ENCODE measurements at regions of chr1 and their contacts with region 1.

Region 1: GRCh38 chr1:228486596-228487335 is 416 bp upstream of the RNF187 start:
- DNase-seq: peak; percentile 65
- ATAC-seq: peak; percentile 64
- H3K4me3 Mint-ChIP-seq: peak overlapping the region; percentile 94
- H3K27ac Mint-ChIP-seq: peak overlapping the region; percentile 100
- H3K4me1 Mint-ChIP-seq: peaks cover 38% of the 10 kb centered on the region
- H3K27me3 Mint-ChIP-seq: no peaks in the 10 kb centered on the region
- CTCF ChIP-seq: no peak

Region 2: DNA sequence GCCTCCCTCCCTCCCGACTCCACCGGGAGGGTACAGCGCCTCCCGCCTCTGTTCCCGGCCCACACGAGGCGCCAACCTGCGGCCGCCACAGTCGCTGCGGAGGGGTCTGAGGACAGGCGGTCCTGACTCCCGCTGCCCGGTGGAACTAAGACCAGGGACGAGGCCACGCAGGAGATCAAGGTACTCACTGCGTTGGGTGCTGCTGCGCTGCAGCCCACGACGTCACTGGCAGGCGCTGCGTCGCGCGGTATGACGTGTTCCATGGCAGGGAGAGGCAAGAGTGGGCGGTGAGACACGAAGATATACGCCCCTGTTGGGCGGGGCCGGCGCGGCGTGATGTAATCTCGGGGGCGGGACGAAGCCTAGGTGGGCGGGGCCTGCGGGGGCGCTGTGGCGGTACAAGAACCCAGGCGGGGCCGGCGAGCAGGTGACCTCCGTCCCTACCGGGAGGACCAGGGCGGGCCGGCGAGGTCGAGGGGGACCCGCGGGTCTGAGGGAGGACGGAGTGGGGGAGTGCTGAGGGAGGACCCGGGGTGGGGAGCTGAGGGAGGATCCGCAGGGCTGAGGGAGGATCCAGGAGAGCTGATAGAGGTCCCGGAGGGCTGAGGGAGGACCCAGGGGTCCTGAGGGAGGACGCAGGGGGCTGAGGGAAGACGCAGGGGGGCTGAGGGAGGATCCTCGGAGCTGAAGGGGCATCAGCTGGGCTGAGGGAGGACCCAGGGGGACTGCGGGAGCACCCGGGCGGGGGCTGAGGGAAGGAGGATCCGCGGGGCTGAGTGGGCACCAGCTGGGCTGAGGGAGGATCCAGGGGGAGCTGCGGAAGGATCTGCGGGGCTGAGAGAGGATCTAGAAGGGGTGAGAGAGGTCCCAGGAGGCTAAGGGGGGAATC is 377.4 kb before region 1 on chr1 and contains the start of gene MRPL55:
- CTCF ChIA-PET with region 1: no interaction called
- POLR2A ChIA-PET with region 1: interaction called, 4 read pairs
- intact Hi-C with region 1: loop called (anchors 1 kb)
- DNase-seq: peak; percentile 100
- ATAC-seq: peak; percentile 96
- H3K4me3 Mint-ChIP-seq: peak within 1 kb of the TSS; percentile 92
- H3K27ac Mint-ChIP-seq: peak within 1 kb of the TSS; percentile 93
- H3K4me1 Mint-ChIP-seq: peaks cover 24% of the 10 kb centered on the region
- H3K27me3 Mint-ChIP-seq: no peaks in the 10 kb centered on the region
- CTCF ChIP-seq: no peak
- total RNA-seq, gene MRPL55: 34.0 and 34.3 TPM in 2 replicates

Region 3: DNA sequence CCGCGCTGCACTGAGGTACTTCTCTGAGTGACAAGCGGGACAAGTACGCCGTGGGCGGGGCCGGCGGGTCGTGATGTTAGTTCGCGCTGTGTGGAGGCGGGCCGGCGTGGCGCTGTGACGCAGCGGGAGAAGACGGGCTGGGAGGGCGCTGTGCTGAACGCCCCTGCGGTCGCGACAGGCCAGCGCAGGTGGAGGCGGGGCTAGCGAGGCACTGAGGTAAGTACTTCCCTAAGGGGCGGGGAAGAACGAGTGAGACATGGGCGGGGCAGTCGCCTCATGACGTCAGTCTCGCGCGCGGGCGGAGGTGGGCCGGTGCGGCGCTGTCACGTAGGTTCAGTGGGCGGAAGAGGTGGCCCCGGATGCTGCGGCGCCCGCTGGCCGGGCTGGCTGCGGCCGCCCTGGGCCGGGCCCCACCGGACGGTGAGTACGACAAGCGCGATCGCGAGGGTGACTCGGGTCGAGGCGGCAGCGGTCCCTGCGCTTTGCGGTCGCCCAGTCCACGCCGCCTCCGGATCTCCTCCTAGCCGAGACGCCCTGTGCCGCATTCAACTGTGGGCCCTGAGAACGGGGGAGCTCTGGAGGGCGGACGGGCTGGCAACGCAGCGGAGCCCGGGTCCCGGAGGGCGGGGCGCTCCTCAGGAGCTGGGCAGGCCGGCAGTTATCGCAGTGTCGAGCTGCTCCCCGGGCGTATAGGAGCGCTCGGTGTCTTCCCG is 346.7 kb before region 1 on chr1 and contains the start of gene GUK1:
- CTCF ChIA-PET with region 1: no interaction called
- POLR2A ChIA-PET with region 1: interaction called, 7 read pairs
- intact Hi-C with region 1: loop called (anchors 1 kb)
- DNase-seq: peak; percentile 99
- ATAC-seq: peak; percentile 92
- H3K4me3 Mint-ChIP-seq: peak within 1 kb of the TSS; percentile 96
- H3K27ac Mint-ChIP-seq: peak within 1 kb of the TSS; percentile 99
- H3K4me1 Mint-ChIP-seq: peaks cover 71% of the 10 kb centered on the region
- H3K27me3 Mint-ChIP-seq: no peaks in the 10 kb centered on the region
- CTCF ChIP-seq: no peak
- total RNA-seq, gene GUK1: 104 and 119 TPM in 2 replicates

Region 4: DNA sequence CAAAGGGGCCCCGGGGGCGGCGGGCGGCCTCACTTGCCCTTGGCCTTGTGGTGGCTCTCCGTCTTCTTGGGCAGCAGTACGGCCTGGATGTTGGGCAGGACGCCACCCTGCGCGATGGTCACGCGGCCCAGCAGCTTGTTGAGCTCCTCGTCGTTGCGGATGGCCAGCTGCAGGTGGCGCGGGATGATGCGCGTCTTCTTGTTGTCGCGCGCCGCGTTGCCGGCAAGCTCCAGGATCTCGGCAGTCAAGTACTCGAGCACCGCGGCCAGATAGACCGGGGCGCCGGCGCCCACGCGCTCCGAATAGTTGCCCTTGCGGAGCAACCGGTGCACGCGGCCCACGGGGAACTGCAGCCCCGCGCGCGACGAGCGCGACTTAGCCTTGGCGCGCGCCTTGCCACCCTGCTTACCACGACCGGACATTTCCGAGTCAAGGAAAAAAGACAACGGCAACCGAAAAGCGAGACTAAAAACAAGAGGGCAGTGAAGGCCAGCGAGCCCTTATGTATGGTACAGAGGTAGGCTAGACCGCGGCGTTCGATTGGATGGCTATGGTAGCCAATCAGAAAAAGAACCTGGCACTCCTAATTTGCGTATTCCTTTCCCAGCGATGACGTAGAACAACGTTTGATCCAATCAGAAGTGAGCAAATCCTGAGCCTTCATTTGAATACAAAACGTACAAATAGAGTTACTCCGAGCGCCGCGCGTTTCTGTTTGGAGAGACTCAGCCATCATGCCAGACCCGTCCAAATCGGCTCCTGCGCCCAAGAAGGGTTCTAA is 29.2 kb before region 1 on chr1:
- CTCF ChIA-PET with region 1: no interaction called
- POLR2A ChIA-PET with region 1: interaction called, 23 read pairs
- intact Hi-C with region 1: no loop called
- DNase-seq: peak; percentile 53
- ATAC-seq: peak; percentile 85
- H3K4me3 Mint-ChIP-seq: peak overlapping the region; percentile 89
- H3K27ac Mint-ChIP-seq: peak overlapping the region; percentile 89
- H3K4me1 Mint-ChIP-seq: peaks cover 25% of the 10 kb centered on the region
- H3K27me3 Mint-ChIP-seq: peaks cover 26% of the 10 kb centered on the region
- CTCF ChIP-seq: no peak

Region 5: GRCh38 chr1:228500901-228501871 is 14.4 kb after region 1 on chr1:
- CTCF ChIA-PET with region 1: interaction called, 16 read pairs
- POLR2A ChIA-PET with region 1: interaction called, 35 read pairs
- intact Hi-C with region 1: loop called (anchors 1 kb)
- DNase-seq: peak; percentile 72
- ATAC-seq: peak; percentile 96
- H3K4me3 Mint-ChIP-seq: peak overlapping the region; percentile 77
- H3K27ac Mint-ChIP-seq: peak overlapping the region; percentile 84
- H3K4me1 Mint-ChIP-seq: peaks cover 17% of the 10 kb centered on the region
- H3K27me3 Mint-ChIP-seq: peaks cover 9% of the 10 kb centered on the region
- CTCF ChIP-seq: peak; percentile 91

Measured in activated B cell treated with CpG ODN at 0.5 μM for 24 hours (primary cell).